ENCODE measurements at regions of chr5 and their contacts with region 1.

Region 1: DNA sequence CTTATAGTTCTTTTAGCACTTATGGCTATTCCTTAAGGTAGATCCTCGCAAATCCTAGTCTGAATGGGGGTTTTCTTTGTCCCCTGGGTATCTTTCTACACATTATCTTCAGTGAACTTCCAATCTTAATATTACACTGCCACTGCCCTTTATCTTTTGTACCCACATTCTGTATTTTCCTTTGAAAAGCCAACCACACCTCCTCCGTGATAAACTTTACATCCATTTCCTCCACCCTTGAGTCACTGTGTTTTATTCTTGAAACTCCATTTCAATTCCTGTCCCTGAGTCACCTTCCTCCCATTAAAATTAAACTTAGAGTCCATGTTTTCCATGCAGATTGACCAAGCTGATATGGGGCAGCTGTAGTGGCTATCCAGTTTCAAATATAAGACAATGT is 43.2 kb upstream of the RICTOR start:
- H3K4me3 ChIP-seq: no peak overlapping the region
- H3K27ac ChIP-seq: no peak overlapping the region
- H3K4me1 ChIP-seq: 0 out of 2 replicates have a peak, but pooled peaks cover 3% of the 10 kb centered on the region
- CTCF ChIP-seq: no peak

Region 2: GRCh38 chr5:38157024-38157423 is 960.4 kb before region 1 on chr5:
- CTCF ChIA-PET with region 1: no interaction called
- POLR2A ChIA-PET with region 1: interaction called, 12 read pairs
- H3K4me3 ChIP-seq: no peak overlapping the region
- H3K27ac ChIP-seq: no peak overlapping the region
- H3K4me1 ChIP-seq: no peaks in the 10 kb centered on the region
- CTCF ChIP-seq: no peak

Region 3: DNA sequence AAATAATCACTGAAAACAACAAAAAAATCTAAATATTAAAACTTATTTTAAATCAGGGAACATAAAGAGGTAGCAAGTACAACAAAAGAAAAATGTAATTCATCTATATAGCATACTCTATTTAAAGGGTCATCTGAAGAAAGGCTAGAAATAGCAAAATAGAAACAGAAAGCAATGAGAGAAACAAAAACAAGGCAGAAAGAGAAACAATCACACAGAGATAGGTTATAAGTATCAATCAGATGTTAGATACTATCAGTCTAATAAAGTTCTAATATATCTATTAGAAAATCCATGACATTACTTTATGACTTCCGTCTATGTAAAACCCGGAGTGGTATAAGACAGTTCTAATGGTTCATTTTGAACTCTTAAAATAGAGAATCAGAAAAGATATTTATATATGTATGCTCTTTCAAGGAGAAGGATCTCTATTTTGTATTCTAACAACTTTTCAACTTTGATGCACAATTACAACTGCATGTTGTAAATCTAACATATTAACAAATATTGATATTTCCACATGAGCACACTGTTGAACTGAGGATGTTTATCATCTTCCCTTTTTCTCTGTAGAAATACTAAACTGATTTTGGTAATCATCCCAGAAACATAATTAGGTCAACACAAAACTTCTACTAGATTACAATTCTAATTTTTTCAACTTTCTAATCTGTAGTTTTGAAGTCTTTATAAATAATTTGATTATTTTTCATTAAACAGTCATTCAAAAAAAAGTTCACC is 59.1 kb before region 1 on chr5:
- CTCF ChIA-PET with region 1: no interaction called
- POLR2A ChIA-PET with region 1: no interaction called
- H3K4me3 ChIP-seq: no peak overlapping the region
- H3K27ac ChIP-seq: no peak overlapping the region
- H3K4me1 ChIP-seq: peaks cover 8% of the 10 kb centered on the region
- CTCF ChIP-seq: no peak

Region 4: GRCh38 chr5:39148983-39149534 is 31.7 kb after region 1 on chr5:
- CTCF ChIA-PET with region 1: no interaction called
- POLR2A ChIA-PET with region 1: no interaction called
- H3K4me3 ChIP-seq: no peak overlapping the region
- H3K27ac ChIP-seq: no peak overlapping the region
- H3K4me1 ChIP-seq: no peaks in the 10 kb centered on the region
- CTCF ChIP-seq: 0 out of 2 replicates have a peak, but pooled peaks have one; percentile 15

Region 5: DNA sequence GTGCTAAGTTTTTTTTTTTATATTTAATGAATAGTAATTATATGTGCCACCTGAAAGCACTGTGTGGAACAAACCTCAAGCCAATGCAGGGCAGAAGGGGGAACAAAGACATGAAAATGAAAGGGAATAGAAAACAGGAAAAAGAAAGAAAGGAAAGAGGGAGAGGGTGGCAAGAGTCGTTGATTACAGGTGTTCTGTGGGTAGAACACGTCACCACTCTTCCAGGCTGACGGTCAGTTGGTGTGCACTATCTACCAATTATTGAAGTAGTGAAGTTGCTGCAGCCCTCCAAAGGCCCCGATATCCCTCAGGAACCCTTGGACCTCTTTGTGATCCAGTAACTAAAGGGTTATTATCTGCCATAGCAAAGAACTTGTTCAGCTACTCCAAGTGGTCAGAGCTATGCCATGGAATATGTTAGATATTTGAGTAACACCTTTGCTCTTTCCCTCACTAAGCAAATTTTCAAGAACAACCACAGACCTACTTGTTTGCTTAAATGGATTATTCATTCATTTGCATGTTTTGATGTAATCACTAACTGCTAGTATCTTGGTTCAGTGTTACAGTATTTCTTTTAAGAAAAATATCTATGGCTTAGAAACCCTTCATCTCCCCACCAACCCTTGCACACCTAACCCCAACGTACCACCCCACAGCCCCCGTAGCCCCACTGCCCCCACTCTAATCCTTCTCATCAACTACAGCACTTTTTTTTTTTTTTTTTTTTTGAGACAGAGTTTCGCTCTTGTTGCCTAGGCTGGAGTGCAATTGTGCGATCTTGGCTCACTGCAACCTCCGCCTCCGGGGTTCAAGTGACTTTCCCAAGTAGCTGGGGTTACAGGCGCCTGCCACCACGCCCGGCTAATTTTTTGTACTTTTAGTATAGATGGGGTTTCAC is 70.7 kb after region 1 on chr5:
- CTCF ChIA-PET with region 1: no interaction called
- POLR2A ChIA-PET with region 1: no interaction called
- H3K4me3 ChIP-seq: no peak overlapping the region
- H3K27ac ChIP-seq: no peak overlapping the region
- H3K4me1 ChIP-seq: no peaks in the 10 kb centered on the region
- CTCF ChIP-seq: no peak